ENCODE measurements at regions of chr1 and their contacts with region 1.

Region 1: DNA sequence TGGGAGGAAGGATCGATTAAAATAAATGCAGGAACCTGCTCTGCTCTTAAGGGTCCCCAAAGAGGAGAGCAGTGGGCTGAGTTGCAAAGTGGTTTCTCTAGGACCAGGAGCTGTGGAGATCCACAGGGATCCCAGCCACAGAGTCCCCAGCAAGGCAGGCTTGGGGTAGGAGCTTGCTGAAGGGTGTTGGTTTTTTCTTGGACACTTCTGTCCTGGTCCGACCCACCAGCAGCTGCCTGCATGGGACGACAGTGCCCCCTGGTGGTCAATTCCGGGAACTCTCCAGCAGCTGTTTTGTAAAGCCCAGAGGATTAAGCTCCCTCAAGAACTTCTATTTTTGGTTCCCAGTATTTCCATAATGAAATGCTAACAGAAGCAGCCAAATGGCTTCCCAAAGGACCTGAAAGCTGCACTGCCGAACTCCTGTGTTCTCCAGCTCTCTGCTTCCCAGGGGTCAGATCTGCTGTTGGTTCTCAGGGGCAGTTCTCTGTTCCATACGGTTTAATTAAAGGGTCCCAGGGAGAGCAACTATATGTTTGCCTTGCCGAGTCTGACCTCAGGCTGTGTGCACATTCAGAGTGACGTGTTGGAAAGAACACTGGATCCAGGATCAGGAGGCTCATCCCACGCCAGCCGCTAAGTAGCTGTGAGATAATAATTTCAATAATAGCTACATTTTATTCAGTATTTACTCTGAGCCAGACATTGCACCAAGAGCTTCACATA is 23.2 kb downstream of the NENF start:
- DNase-seq: peak; percentile 71 to 98
- H3K4me3 ChIP-seq: no peak overlapping the region
- H3K27ac ChIP-seq: no peak overlapping the region
- H3K4me1 ChIP-seq: peaks cover 0 to 4% (median under 1%) of the 10 kb centered on the region in 4 experiments; a peak in 2 of 7 replicates
- H3K27me3 ChIP-seq: no peaks in the 10 kb centered on the region
- CTCF ChIP-seq: peak; percentile 86 to 92 (median 90)
- EP300 ChIP-seq: no peak
- POLR2A ChIP-seq: no peak
- RAD21 ChIP-seq: peak; percentile 98

Region 2: GRCh38 chr1:211698161-211699026 is 757.6 kb before region 1 on chr1:
- CTCF ChIA-PET with region 1: interaction called, 12 read pairs
- POLR2A ChIA-PET with region 1: no interaction called
- DNase-seq: peak in 1 of 2 experiments; percentile 99
- H3K4me3 ChIP-seq: peak overlapping the region; percentile 28 to 72 (median 61); a peak in 7 of 8 replicates
- H3K27ac ChIP-seq: no peak overlapping the region
- H3K4me1 ChIP-seq: no peaks in the 10 kb centered on the region; a peak in 1 of 7 replicates
- H3K27me3 ChIP-seq: peaks cover 1 to 13% (median 5%) of the 10 kb centered on the region in 4 experiments; a peak in 6 of 7 replicates
- CTCF ChIP-seq: peak; percentile 98 to 99 (median 99)
- EP300 ChIP-seq: no peak
- POLR2A ChIP-seq: no peak
- RAD21 ChIP-seq: peak; percentile 93 to 95

Region 3: GRCh38 chr1:212375986-212376385 is 80.0 kb before region 1 on chr1:
- CTCF ChIA-PET with region 1: interaction called, 95 read pairs
- POLR2A ChIA-PET with region 1: no interaction called
- DNase-seq: no peak
- H3K4me3 ChIP-seq: no peak overlapping the region
- H3K27ac ChIP-seq: no peak overlapping the region
- H3K4me1 ChIP-seq: no peaks in the 10 kb centered on the region
- H3K27me3 ChIP-seq: no peaks in the 10 kb centered on the region
- CTCF ChIP-seq: no peak
- EP300 ChIP-seq: no peak
- POLR2A ChIP-seq: no peak
- RAD21 ChIP-seq: no peak

Region 4: GRCh38 chr1:212440419-212440818 is 15.5 kb before region 1 on chr1:
- CTCF ChIA-PET with region 1: interaction called, 48 read pairs
- POLR2A ChIA-PET with region 1: interaction called, 3 read pairs
- DNase-seq: no peak
- H3K4me3 ChIP-seq: no peak overlapping the region
- H3K27ac ChIP-seq: no peak overlapping the region
- H3K4me1 ChIP-seq: no peaks in the 10 kb centered on the region
- H3K27me3 ChIP-seq: no peaks in the 10 kb centered on the region
- CTCF ChIP-seq: no peak
- EP300 ChIP-seq: no peak
- POLR2A ChIP-seq: no peak
- RAD21 ChIP-seq: no peak

Region 5: GRCh38 chr1:212613455-212614390 is 157.8 kb after region 1 on chr1:
- CTCF ChIA-PET with region 1: interaction called, 21 read pairs
- POLR2A ChIA-PET with region 1: interaction called, 10 read pairs
- DNase-seq: no peak
- H3K4me3 ChIP-seq: no peak overlapping the region
- H3K27ac ChIP-seq: no peak overlapping the region
- H3K4me1 ChIP-seq: peaks cover 8 to 31% (median 19%) of the 10 kb centered on the region in 4 experiments; a peak in 6 of 7 replicates
- H3K27me3 ChIP-seq: peaks cover 0 to 14% (median 6%) of the 10 kb centered on the region in 4 experiments; a peak in 3 of 7 replicates
- CTCF ChIP-seq: no peak
- EP300 ChIP-seq: no peak
- POLR2A ChIP-seq: peak; percentile 23 to 53; a peak in 2 of 3 replicates
- RAD21 ChIP-seq: no peak

Region 6: GRCh38 chr1:212678456-212679410 is 222.8 kb after region 1 on chr1:
- CTCF ChIA-PET with region 1: interaction called, 23 read pairs
- POLR2A ChIA-PET with region 1: no interaction called
- DNase-seq: no peak
- H3K4me3 ChIP-seq: no peak overlapping the region
- H3K27ac ChIP-seq: no peak overlapping the region
- H3K4me1 ChIP-seq: no peaks in the 10 kb centered on the region; a peak in 2 of 7 replicates
- H3K27me3 ChIP-seq: no peaks in the 10 kb centered on the region
- CTCF ChIP-seq: no peak
- EP300 ChIP-seq: no peak
- POLR2A ChIP-seq: no peak
- RAD21 ChIP-seq: no peak

Measured in H1 (cell line).